ENCODE measurements at regions of chr16 and their contacts with region 1.

Region 1: GRCh38 chr16:72400257-72400882 is 228.4 kb upstream of the PMFBP1 start:
- DNase-seq: peak; percentile 48
- H3K4me3 ChIP-seq: no peak overlapping the region
- H3K27ac ChIP-seq: no peak overlapping the region
- H3K27me3 ChIP-seq: no peaks in the 10 kb centered on the region
- CTCF ChIP-seq: peak; percentile 81

Region 2: GRCh38 chr16:72172105-72173034 is 228.0 kb before region 1 on chr16 and contains the start of gene PMFBP1:
- CTCF ChIA-PET with region 1: no interaction called
- POLR2A ChIA-PET with region 1: no interaction called
- DNase-seq: peak; percentile 6
- H3K4me3 ChIP-seq: no peak within 1 kb of the TSS
- H3K27ac ChIP-seq: no peak within 1 kb of the TSS
- H3K27me3 ChIP-seq: no peaks in the 10 kb centered on the region
- CTCF ChIP-seq: no peak
- polyA plus RNA-seq, gene PMFBP1: 0.05 TPM in 1 of 2 replicates, not detected in the other

Region 3: GRCh38 chr16:72291531-72291981 is 108.8 kb before region 1 on chr16:
- CTCF ChIA-PET with region 1: interaction called, 10 read pairs
- POLR2A ChIA-PET with region 1: no interaction called
- DNase-seq: peak; percentile 70
- H3K4me3 ChIP-seq: no peak overlapping the region
- H3K27ac ChIP-seq: peak overlapping the region; percentile 87
- H3K27me3 ChIP-seq: no peaks in the 10 kb centered on the region
- CTCF ChIP-seq: no peak

Region 4: DNA sequence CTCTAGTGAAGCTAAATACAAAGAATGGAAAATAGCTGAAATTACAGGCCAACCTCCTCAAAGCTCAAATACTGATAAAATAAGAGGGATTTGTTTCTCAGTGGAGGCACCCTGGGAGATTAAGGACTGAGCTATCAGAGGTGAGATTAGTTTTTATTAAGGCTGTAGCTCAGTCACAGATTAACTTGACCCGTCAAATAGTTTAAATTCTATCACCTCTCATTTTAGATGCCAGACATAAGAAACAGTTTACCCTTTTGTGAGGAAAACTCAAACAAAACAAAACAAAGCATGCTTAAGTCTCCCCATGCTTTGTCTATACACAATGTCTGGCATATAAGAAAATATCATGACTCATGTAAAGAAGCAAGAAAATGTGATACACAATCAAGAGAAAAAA is 20.1 kb before region 1 on chr16:
- CTCF ChIA-PET with region 1: interaction called, 17 read pairs
- POLR2A ChIA-PET with region 1: no interaction called
- DNase-seq: no peak
- H3K4me3 ChIP-seq: no peak overlapping the region
- H3K27ac ChIP-seq: no peak overlapping the region
- H3K27me3 ChIP-seq: no peaks in the 10 kb centered on the region
- CTCF ChIP-seq: no peak

Region 5: GRCh38 chr16:72419638-72420037 is 19.3 kb after region 1 on chr16:
- CTCF ChIA-PET with region 1: interaction called, 10 read pairs
- POLR2A ChIA-PET with region 1: no interaction called
- DNase-seq: no peak
- H3K4me3 ChIP-seq: no peak overlapping the region
- H3K27ac ChIP-seq: no peak overlapping the region
- H3K27me3 ChIP-seq: no peaks in the 10 kb centered on the region
- CTCF ChIP-seq: no peak

Region 6: DNA sequence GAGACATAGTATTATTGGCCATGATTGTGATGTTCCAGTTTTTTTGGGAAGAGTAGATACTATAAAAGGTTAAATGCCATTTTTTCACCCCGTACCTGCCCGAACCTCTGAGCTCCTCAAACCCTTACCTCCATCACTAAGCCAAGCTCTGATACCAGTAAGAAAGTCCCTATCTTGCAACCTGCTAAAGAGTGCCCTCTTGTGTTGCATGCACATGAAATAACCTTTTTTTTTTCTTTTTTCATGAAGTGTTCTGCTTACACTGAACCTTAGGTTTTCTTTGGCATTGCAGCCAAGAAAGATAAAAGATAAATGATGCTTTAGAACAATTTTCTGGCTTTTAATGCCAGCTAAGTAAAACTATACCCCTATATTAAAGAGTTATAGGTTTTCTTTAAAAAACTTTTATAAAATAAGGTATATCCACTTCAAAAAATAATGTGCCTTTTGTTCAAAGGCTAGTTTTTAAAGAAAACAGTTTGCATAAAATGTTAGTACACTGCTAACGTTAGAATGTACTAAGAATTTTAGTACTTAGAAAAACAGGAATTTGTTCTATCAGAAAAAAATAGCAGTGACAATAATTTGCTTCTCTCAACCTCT is 66.9 kb after region 1 on chr16:
- CTCF ChIA-PET with region 1: interaction called, 32 read pairs
- POLR2A ChIA-PET with region 1: no interaction called
- DNase-seq: peak; percentile 6
- H3K4me3 ChIP-seq: no peak overlapping the region
- H3K27ac ChIP-seq: no peak overlapping the region
- H3K27me3 ChIP-seq: no peaks in the 10 kb centered on the region
- CTCF ChIP-seq: peak; percentile 86

Measured in AG04450 (cell line).